ENCODE measurements at regions of chr12 and their contacts with region 1.

Region 1: GRCh38 chr12:122078141-122079032 is at the start of gene MLXIP:
- DNase-seq: peak; percentile 78
- ATAC-seq: peak; percentile 76
- H3K4me3 ChIP-seq: peak within 1 kb of the TSS; percentile 56 to 74 (median 62)
- H3K27ac ChIP-seq: peak within 1 kb of the TSS; percentile 50
- H3K4me1 ChIP-seq: peaks cover 58% of the 10 kb centered on the region
- H3K27me3 ChIP-seq: no peaks in the 10 kb centered on the region
- CTCF ChIP-seq: no peak
- EP300 ChIP-seq: no peak
- POLR2A ChIP-seq: peak; percentile 53 to 80; a peak in 3 of 4 replicates
- RAD21 ChIP-seq: 0 out of 2 replicates have a peak, but pooled peaks have one; percentile 26
- total RNA-seq, gene MLXIP: 4.4 and 5.3 TPM in 2 replicates

Region 2: GRCh38 chr12:121657305-121658008 is 420.9 kb before region 1 on chr12:
- CTCF ChIA-PET with region 1: no interaction called
- POLR2A ChIA-PET with region 1: no interaction called
- in situ Hi-C with region 1: no loop called
- intact Hi-C with region 1: no loop called
- DNase-seq: no peak
- ATAC-seq: no peak
- H3K4me3 ChIP-seq: no peak overlapping the region
- H3K27ac ChIP-seq: no peak overlapping the region
- H3K4me1 ChIP-seq: peaks cover 24% of the 10 kb centered on the region
- H3K27me3 ChIP-seq: no peaks in the 10 kb centered on the region
- CTCF ChIP-seq: no peak
- EP300 ChIP-seq: no peak
- POLR2A ChIP-seq: no peak
- RAD21 ChIP-seq: no peak

Region 3: GRCh38 chr12:122064025-122064777 is 14.2 kb before region 1 on chr12:
- CTCF ChIA-PET with region 1: no interaction called
- POLR2A ChIA-PET with region 1: interaction called, 27 read pairs
- in situ Hi-C with region 1: no loop called
- intact Hi-C with region 1: loop called (anchors 1 kb)
- DNase-seq: peak; percentile 97
- ATAC-seq: peak; percentile 94
- H3K4me3 ChIP-seq: peak overlapping the region; percentile 36 to 66 (median 47)
- H3K27ac ChIP-seq: peak overlapping the region; percentile 71
- H3K4me1 ChIP-seq: peaks cover 45% of the 10 kb centered on the region
- H3K27me3 ChIP-seq: no peaks in the 10 kb centered on the region
- CTCF ChIP-seq: peak; percentile 83
- EP300 ChIP-seq: 0 out of 4 replicates have a peak, but pooled peaks of 1 of the 2 experiments have one; percentile 1
- POLR2A ChIP-seq: peak; percentile 37 to 61
- RAD21 ChIP-seq: no peak

Region 4: GRCh38 chr12:122097927-122098756 is 19.8 kb after region 1 on chr12:
- CTCF ChIA-PET with region 1: no interaction called
- POLR2A ChIA-PET with region 1: interaction called, 13 read pairs
- in situ Hi-C with region 1: no loop called
- intact Hi-C with region 1: no loop called
- DNase-seq: peak; percentile 46
- ATAC-seq: peak; percentile 80
- H3K4me3 ChIP-seq: no peak overlapping the region; a peak in 1 of 6 replicates
- H3K27ac ChIP-seq: peak overlapping the region; percentile 21
- H3K4me1 ChIP-seq: peaks cover 47% of the 10 kb centered on the region
- H3K27me3 ChIP-seq: no peaks in the 10 kb centered on the region
- CTCF ChIP-seq: no peak
- EP300 ChIP-seq: no peak
- POLR2A ChIP-seq: no peak
- RAD21 ChIP-seq: no peak